ENCODE measurements at regions of chr9 and their contacts with region 1.

Region 1: DNA sequence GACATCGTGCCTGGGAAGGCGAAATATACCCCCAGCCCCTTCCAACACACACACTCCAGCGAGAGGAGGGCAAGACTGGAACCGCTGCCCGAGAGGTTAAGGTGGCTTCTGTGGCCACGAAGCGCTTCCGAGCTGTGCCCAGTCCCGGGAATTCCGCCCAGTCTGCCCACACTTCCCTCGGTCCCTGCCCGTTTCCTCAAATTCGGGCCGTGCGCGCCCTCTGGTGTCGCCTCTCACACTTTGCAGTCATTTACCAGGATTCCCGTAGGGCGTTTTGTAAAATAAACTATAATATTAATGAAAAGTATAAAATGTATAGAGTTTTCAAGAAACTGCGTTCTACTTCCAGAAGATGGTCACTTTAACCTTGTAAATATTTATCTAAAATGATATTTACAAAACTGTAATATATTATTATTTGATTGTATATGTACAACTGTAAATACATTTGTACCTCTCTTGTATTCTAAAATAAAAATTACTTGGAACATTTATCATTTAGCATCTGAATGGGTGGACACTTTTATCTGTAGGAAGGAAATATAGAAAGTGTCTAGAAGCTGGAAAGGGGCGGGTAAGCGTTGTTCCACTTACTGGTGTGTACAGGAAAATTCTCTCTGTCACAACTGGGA is 11.0 kb upstream of the EXOSC2 start:
- DNase-seq: peak; percentile 80 to 89 (median 89)
- ATAC-seq: peak; percentile 73 to 78
- H3K4me3 ChIP-seq: peak overlapping the region; percentile 50
- H3K27ac ChIP-seq: no peak overlapping the region
- H3K4me1 ChIP-seq: peaks cover 2% of the 10 kb centered on the region
- H3K27me3 ChIP-seq: no peaks in the 10 kb centered on the region

Region 2: GRCh38 chr9:130461218-130461630 is 221.4 kb before region 1 on chr9:
- intact Hi-C with region 1: loop called (anchors 1 to 5 kb)
- DNase-seq: peak; percentile 63 to 86 (median 84)
- ATAC-seq: peak; percentile 37 to 50
- H3K4me3 ChIP-seq: no peak overlapping the region
- H3K27ac ChIP-seq: no peak overlapping the region
- H3K4me1 ChIP-seq: no peaks in the 10 kb centered on the region
- H3K27me3 ChIP-seq: no peaks in the 10 kb centered on the region

Region 3: DNA sequence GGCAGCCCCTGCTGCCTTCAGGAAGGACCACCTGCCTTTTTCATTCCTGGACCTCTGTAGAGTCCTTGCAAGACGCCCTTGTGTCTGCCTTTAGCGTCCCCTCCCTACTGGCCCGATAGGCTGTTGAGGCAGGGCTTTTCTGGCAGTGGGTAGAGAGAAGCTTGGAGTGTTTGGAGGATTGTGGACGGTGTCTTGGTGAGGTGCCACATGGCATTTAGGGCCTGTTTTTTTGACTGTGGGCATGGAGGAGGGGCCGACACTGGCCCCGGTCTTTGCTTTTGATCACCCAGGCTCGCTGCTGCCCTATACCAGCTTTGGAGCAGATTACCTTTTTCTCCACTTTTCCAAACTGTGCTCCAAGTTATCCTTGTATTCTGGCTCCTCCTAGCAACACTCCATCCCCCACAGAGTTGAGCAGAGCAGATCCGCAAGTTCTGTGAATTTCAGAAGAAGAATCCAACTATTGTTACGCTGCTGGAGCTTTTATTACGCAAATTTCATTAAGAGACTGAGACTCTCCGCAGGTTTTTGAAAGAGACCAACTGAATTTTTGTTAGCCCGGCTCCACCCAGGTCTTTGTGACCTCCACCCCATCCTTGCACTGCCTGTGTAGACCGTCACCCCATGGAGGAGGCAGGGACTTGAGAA is 53.0 kb before region 1 on chr9:
- intact Hi-C with region 1: loop called in 1 of 4 experiments (anchors 5 kb)
- DNase-seq: peak in 1 of 3 donors; percentile 39
- ATAC-seq: peak in 1 of 2 donors; percentile 6
- H3K4me3 ChIP-seq: no peak overlapping the region
- H3K27ac ChIP-seq: no peak overlapping the region
- H3K4me1 ChIP-seq: no peaks in the 10 kb centered on the region
- H3K27me3 ChIP-seq: no peaks in the 10 kb centered on the region

Measured in right cardiac atrium (tissue), 5 donors.